Gastrocnemius medialis (tissue), 4 donors: ENCODE measurements at regions of chr1 and their contacts with region 1.

Region 1: DNA sequence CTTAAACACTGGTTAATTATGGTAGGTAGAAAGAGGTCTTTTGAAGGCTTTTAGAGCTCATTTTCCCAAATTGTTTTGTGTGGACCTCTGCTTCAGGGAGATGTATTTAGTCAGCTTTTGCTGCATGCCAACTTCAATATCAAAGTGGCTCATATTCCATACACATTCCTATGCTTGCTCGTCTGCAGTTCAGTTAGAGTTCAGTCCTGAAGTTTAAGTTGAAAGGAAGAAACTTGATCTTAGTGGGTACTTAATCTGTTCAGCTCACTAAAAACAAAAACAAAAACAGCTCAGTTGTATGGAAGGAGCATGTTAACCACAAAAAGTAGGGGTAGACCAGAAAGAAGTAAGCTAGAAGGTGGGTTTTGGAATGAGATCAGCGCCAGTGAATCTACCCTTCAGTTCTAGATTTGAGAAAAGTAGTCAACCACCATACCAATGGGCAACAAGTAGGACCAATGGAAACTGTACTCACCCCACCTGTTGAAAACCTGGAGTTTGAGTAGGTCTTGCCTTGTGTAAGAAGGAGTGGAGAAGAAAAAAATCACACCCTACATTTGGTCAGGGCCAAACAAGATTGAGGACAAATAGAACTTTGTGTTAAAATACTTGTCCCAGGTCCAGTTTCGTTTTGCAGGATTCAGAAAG is 58.0 kb downstream of the LEPR start:
- DNase-seq: no peak
- ATAC-seq: no peak
- H3K4me3 ChIP-seq: no peak overlapping the region
- H3K27ac ChIP-seq: no peak overlapping the region
- H3K4me1 ChIP-seq: peaks cover 0 to 5% of the 10 kb centered on the region in 2 donors
- H3K27me3 ChIP-seq: no peaks in the 10 kb centered on the region
- CTCF ChIP-seq: no peak
- POLR2A ChIP-seq: no peak

Region 2: GRCh38 chr1:65525266-65526048 is 47.0 kb after region 1 on chr1:
- in situ Hi-C with region 1: no loop called
- intact Hi-C with region 1: loop called (anchors 5 kb)
- DNase-seq: no peak
- ATAC-seq: peak in 1 of 2 donors; percentile 27
- H3K4me3 ChIP-seq: peak overlapping the region; percentile 56 to 68 (median 64)
- H3K27ac ChIP-seq: peak overlapping the region; percentile 7 to 57 (median 42)
- H3K4me1 ChIP-seq: peaks cover 0 to 11% of the 10 kb centered on the region in 2 donors
- H3K27me3 ChIP-seq: peaks cover 23 to 38% (median 29%) of the 10 kb centered on the region in 3 donors
- CTCF ChIP-seq: no peak
- POLR2A ChIP-seq: no peak